ENCODE measurements at regions of chr2 and their contacts with region 1.

Region 1: DNA sequence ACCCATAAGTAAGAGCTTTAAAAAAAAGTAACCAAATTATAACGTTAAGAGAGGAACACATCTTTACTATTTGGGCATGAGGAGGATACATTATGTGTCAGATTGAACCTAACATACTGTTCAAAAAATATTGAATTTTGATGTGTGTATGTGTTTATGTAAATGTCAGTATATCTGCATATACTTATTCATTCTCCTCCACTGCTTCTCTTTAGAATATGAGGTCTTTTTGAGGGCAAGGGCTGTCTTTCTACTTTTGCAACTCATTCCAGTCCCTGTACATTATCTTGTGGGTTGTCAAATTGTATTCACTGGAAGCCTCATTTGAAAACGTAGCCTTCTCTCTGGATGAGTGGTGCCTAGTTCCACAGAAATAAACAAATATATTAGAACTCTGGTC is 509.4 kb upstream of the HNMT start:
- DNase-seq: no peak
- H3K4me3 ChIP-seq: no peak overlapping the region
- H3K27ac ChIP-seq: no peak overlapping the region
- H3K4me1 ChIP-seq: no peaks in the 10 kb centered on the region
- H3K27me3 ChIP-seq: no peaks in the 10 kb centered on the region
- CTCF ChIP-seq: no peak
- EP300 ChIP-seq: no peak
- POLR2A ChIP-seq: no peak
- RAD21 ChIP-seq: no peak

Region 2: GRCh38 chr2:137420744-137421143 is 34.1 kb before region 1 on chr2:
- CTCF ChIA-PET with region 1: no interaction called
- POLR2A ChIA-PET with region 1: no interaction called
- DNase-seq: no peak
- H3K4me3 ChIP-seq: no peak overlapping the region
- H3K27ac ChIP-seq: no peak overlapping the region
- H3K4me1 ChIP-seq: no peaks in the 10 kb centered on the region
- H3K27me3 ChIP-seq: no peaks in the 10 kb centered on the region
- CTCF ChIP-seq: no peak
- EP300 ChIP-seq: no peak
- POLR2A ChIP-seq: no peak
- RAD21 ChIP-seq: no peak

Region 3: DNA sequence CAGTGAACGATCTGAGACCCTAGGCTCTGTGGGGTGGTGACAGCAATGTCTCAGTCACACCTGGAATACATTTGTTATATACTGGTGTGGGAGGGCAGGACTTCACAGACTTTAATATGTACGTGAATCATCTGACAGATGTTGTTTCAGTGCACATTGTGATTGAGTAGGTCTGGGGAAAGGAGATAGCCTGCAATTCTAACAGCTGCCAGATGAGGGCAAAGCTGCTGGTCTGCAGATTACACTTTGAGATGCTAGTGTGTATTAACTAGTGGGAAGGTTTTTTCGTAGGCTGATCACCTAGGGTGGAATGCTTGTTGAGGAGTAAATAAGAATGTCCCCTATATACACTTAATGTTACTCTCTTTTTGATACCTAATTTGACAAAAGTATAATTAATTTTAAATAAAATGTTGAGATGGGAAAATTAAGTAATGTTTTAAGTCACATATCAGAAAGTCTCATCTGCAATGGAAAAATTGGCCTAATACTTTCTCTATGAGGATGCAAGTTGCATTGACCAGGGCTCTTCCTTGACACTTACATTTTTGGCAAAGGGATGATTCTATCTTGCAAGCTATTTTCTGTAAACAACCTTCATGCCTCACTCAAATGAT is 12.5 kb after region 1 on chr2:
- CTCF ChIA-PET with region 1: interaction called, 24 read pairs
- POLR2A ChIA-PET with region 1: no interaction called
- DNase-seq: peak; percentile 3 to 75
- H3K4me3 ChIP-seq: no peak overlapping the region
- H3K27ac ChIP-seq: no peak overlapping the region
- H3K4me1 ChIP-seq: peaks cover 0 to 2% (median 1%) of the 10 kb centered on the region in 4 experiments; a peak in 1 of 7 replicates
- H3K27me3 ChIP-seq: no peaks in the 10 kb centered on the region
- CTCF ChIP-seq: peak in 2 of 3 experiments; percentile 60 to 86; a peak in 3 of 4 replicates
- EP300 ChIP-seq: no peak
- POLR2A ChIP-seq: no peak
- RAD21 ChIP-seq: peak; percentile 72 to 78

Measured in H1 (cell line).